AG04449 (cell line): ENCODE measurements at regions of chr10 and their contacts with region 1.

Region 1: GRCh38 chr10:102776779-102777456 is 33.2 kb downstream of the WBP1L start:
- DNase-seq: peak; percentile 93
- H3K4me3 ChIP-seq: peak overlapping the region; percentile 51
- CTCF ChIP-seq: no peak

Region 2: GRCh38 chr10:102726274-102726673 is 50.6 kb before region 1 on chr10:
- CTCF ChIA-PET with region 1: no interaction called
- POLR2A ChIA-PET with region 1: no interaction called
- DNase-seq: no peak
- H3K4me3 ChIP-seq: no peak overlapping the region
- CTCF ChIP-seq: no peak

Region 3: GRCh38 chr10:102764389-102765178 is 12.3 kb before region 1 on chr10:
- CTCF ChIA-PET with region 1: interaction called, 9 read pairs
- POLR2A ChIA-PET with region 1: interaction called, 18 read pairs
- DNase-seq: no peak
- H3K4me3 ChIP-seq: no peak overlapping the region
- CTCF ChIP-seq: no peak